ENCODE measurements at regions of chr1 and their contacts with region 1.

Region 1: GRCh38 chr1:64242895-64243756 is 39.7 kb downstream of the UBE2U start:
- DNase-seq: no peak
- H3K4me3 ChIP-seq: no peak overlapping the region
- H3K27ac ChIP-seq: no peak overlapping the region
- H3K4me1 ChIP-seq: no peaks in the 10 kb centered on the region
- H3K27me3 ChIP-seq: no peaks in the 10 kb centered on the region
- CTCF ChIP-seq: peak; percentile 12 to 59 (median 46)
- POLR2A ChIP-seq: no peak

Region 2: DNA sequence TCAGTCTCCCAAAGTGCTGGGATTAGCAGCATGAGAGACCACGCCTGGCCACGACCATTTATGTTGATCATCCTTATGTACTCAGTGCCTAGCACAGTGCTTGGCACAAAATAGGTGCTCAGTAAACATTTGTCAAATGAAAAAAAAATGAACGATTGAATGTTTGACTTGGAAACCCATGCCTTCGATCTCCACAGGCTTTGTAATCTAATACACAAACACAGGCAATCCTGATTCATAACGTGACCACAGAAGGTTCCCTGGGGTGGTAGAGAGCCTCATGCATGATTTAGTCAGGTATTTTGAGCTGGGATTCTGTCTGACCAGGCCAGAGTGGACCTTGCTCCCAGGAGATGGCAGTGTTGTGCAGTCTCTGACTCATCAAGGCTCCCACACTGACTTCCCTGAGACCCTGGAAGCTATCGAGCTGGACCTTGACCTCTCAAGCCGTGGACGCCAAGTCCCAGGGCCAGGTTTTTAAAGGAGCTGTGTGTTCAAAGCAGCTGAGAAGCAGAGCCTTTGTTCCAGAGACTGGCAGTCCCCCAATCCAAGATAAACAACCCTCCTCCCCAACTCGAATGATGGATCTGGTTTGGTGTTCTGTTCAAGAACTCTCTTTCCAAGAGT is 568.8 kb before region 1 on chr1:
- intact Hi-C with region 1: loop called (anchors 5 to 10 kb)
- DNase-seq: peak; percentile 72 to 87 (median 82)
- H3K4me3 ChIP-seq: no peak overlapping the region
- H3K27ac ChIP-seq: no peak overlapping the region
- H3K4me1 ChIP-seq: peaks cover 0 to 6% of the 10 kb centered on the region in 2 donors
- H3K27me3 ChIP-seq: no peaks in the 10 kb centered on the region
- CTCF ChIP-seq: peak; percentile 36 to 71 (median 64)
- POLR2A ChIP-seq: no peak

Region 3: DNA sequence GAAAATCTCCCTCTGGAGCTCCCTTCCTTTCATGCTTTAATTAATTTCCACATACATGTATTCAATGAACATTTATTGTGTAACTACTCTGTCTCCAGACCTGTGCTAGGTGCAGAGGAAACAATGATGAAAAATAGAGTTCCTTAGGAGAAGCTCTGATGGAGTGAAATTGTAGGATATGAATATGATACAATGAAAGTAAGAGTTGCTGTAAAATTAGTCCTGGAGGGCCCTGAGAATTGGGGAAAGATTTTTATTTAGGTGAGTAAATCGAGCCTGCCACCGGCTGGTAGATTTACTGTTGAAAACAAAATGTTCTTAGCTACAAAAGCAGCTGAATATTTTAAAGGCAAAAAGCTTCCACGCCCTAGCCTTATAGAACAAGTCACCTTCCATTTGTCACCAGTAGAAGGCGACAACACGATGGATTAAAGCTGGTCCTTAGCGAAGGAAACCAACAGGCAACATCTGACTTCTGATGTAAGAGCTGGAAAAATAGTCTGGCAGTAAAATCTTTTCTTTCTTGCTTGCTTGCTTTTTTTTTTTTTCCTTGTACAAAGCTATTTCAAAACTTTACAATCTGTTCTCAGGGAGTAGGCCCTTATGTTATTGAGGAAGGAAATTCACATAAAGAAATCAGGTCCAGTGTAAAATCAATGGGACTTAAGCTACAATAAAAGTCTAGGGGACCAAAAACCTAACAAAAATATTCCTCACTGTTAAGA is 551.3 kb before region 1 on chr1:
- intact Hi-C with region 1: loop called in 1 of 2 experiments (anchors 5 kb)
- DNase-seq: peak; percentile 57 to 79 (median 64)
- H3K4me3 ChIP-seq: no peak overlapping the region
- H3K27ac ChIP-seq: no peak overlapping the region
- H3K4me1 ChIP-seq: peaks cover 0 to 4% of the 10 kb centered on the region in 2 donors
- H3K27me3 ChIP-seq: no peaks in the 10 kb centered on the region
- CTCF ChIP-seq: peak; percentile 61 to 84 (median 80)
- POLR2A ChIP-seq: no peak

Region 4: GRCh38 chr1:63759778-63760177 is 483.3 kb before region 1 on chr1:
- intact Hi-C with region 1: loop called in 1 of 2 experiments (anchors 10 kb)
- DNase-seq: no peak
- H3K4me3 ChIP-seq: no peak overlapping the region
- H3K27ac ChIP-seq: no peak overlapping the region
- H3K4me1 ChIP-seq: no peaks in the 10 kb centered on the region
- H3K27me3 ChIP-seq: no peaks in the 10 kb centered on the region
- CTCF ChIP-seq: no peak
- POLR2A ChIP-seq: no peak

Region 5: DNA sequence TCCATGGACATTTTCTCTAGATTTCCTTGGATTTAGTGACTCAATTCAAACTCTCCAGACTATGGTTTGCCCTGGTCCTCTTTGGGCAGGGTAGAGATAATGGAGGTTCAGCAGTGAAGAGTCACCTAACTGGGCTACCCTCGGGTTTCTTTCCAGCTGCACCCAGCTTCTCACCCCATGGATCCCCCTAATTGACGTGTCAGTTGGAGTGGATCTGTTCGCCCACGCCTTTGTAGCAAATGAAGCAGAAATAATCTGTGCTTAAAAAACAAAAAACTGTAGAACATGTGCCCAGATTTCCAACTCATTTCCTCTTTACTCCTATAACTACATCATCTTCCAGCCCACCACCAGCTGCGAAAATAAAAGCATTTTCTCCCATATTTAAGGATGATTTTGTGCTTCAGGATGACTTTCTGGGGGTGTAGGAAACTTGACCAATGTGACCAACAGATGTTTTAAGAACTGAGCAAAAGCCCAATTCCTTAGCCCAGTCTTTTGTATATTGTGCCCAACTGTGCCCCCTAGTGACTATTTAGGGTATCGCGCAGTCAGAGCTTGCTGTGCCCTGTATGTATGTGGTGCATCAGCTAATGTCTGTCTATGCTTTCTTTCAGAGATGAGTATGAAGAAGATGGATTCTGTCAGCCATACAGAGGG is 106.2 kb before region 1 on chr1:
- intact Hi-C with region 1: loop called in 1 of 2 experiments (anchors 5 kb)
- DNase-seq: peak; percentile 66 to 94 (median 81)
- H3K4me3 ChIP-seq: no peak overlapping the region
- H3K27ac ChIP-seq: no peak overlapping the region
- H3K4me1 ChIP-seq: no peaks in the 10 kb centered on the region
- H3K27me3 ChIP-seq: no peaks in the 10 kb centered on the region
- CTCF ChIP-seq: peak; percentile 83 to 92 (median 89)
- POLR2A ChIP-seq: no peak